ENCODE measurements at regions of chr6 and their contacts with region 1.

Region 1: DNA sequence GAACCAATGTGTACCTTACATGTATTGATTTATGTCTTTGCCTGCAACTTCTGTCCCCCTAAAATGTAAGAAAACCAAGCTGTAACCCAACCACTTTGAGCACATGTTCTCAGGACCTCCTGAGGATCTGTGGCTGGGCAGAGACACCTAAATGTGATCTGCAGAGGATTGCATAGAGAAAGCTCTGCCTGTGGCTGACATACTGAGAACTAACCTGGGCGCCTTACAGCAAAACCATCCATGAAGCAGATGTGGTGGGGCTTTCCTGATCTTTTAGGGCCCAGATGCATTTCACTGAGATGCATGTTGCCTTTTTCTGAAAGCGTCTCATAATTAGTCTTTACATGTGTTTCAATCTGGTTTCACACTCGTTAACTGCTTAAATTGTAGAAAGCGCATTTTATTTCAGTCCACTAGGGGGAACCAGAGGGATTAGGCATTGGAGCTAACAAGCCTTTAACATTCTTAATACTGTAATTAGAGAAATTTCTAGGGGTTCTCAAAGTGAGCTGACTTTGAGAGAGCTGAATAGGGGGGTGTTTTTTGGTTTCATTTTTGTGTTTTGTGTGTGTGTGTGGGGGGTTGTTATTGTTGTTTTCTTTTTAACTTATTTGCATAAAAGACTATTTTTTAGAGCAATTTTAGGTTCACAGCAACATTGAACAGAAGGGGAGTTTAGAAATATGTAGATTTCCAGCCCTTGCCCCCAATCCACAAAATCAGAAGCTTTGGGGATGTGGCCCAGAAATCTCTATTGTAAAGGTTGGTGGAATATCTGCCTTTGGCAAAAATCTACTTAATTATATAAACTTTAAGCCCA is 50.9 kb upstream of the FAM184A start:
- DNase-seq: peak in 2 of 5 donors; percentile 43 to 46
- H3K4me3 ChIP-seq: no peak overlapping the region
- H3K4me3 Mint-ChIP-seq: no peak overlapping the region
- H3K27ac ChIP-seq: peak overlapping the region; percentile 35
- H3K27ac Mint-ChIP-seq: no peak overlapping the region
- H3K4me1 ChIP-seq: peaks cover 3% of the 10 kb centered on the region
- H3K4me1 Mint-ChIP-seq: peaks cover 0 to 4% (median 4%) of the 10 kb centered on the region in 3 donors
- H3K27me3 ChIP-seq: no peaks in the 10 kb centered on the region
- H3K27me3 Mint-ChIP-seq: peaks cover 0 to 2% of the 10 kb centered on the region in 2 donors

Region 2: GRCh38 chr6:119148098-119148824 is 18.9 kb after region 1 on chr6:
- CTCF ChIA-PET with region 1: interaction called, 10 read pairs
- POLR2A ChIA-PET with region 1: no interaction called
- DNase-seq: no peak
- H3K4me3 ChIP-seq: no peak overlapping the region
- H3K4me3 Mint-ChIP-seq: no peak overlapping the region
- H3K27ac ChIP-seq: peak overlapping the region; percentile 58
- H3K27ac Mint-ChIP-seq: peak overlapping the region in 2 of 8 donors; percentile 39 to 42
- H3K4me1 ChIP-seq: no peaks in the 10 kb centered on the region
- H3K4me1 Mint-ChIP-seq: peaks cover 9 to 25% (median 12%) of the 10 kb centered on the region in 3 donors
- H3K27me3 ChIP-seq: no peaks in the 10 kb centered on the region
- H3K27me3 Mint-ChIP-seq: peaks cover under 1 to 4% of the 10 kb centered on the region in 2 donors

Region 3: DNA sequence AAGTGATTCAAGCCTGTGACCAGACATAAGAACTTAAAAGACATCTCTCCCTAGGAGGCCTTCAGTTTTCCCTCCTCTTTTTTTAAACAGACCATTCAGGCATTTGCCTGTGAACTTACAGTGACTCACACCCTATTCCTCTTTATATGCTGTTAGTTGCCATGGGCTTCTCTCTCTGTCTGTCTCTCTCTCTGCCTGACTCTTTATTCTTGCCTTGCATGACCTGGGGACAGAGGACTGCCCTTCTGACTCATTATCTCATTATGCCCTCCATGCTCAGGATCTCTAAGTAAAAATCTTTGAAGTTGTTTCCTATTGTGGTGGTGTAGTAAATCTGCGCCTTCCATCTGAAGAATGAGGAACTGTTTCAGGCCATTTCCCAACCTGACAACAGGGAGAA is 662.4 kb after region 1 on chr6:
- CTCF ChIA-PET with region 1: no interaction called
- POLR2A ChIA-PET with region 1: no interaction called
- DNase-seq: no peak
- H3K4me3 ChIP-seq: no peak overlapping the region
- H3K4me3 Mint-ChIP-seq: no peak overlapping the region
- H3K27ac ChIP-seq: no peak overlapping the region
- H3K27ac Mint-ChIP-seq: no peak overlapping the region
- H3K4me1 ChIP-seq: no peaks in the 10 kb centered on the region
- H3K4me1 Mint-ChIP-seq: no peaks in the 10 kb centered on the region
- H3K27me3 ChIP-seq: no peaks in the 10 kb centered on the region
- H3K27me3 Mint-ChIP-seq: no peaks in the 10 kb centered on the region

Measured in CD8-positive, alpha-beta memory T cell (primary cell).